Right cardiac atrium (tissue), 5 donors: ENCODE measurements at regions of chr4 and their contacts with region 1.

Region 1: GRCh38 chr4:85968945-85969819 is 390.7 kb downstream of the MAPK10 start:
- DNase-seq: no peak
- ATAC-seq: peak in 1 of 2 donors; percentile 72
- H3K4me3 ChIP-seq: no peak overlapping the region
- H3K27ac ChIP-seq: no peak overlapping the region
- H3K4me1 ChIP-seq: peaks cover 2% of the 10 kb centered on the region
- H3K27me3 ChIP-seq: no peaks in the 10 kb centered on the region

Region 2: GRCh38 chr4:85084380-85085094 is 884.6 kb before region 1 on chr4:
- intact Hi-C with region 1: loop called in 1 of 4 experiments (anchors 10 kb)
- DNase-seq: no peak
- ATAC-seq: peak; percentile 55 to 72
- H3K4me3 ChIP-seq: no peak overlapping the region
- H3K27ac ChIP-seq: no peak overlapping the region
- H3K4me1 ChIP-seq: no peaks in the 10 kb centered on the region
- H3K27me3 ChIP-seq: no peaks in the 10 kb centered on the region

Region 3: GRCh38 chr4:85147439-85148076 is 821.6 kb before region 1 on chr4:
- intact Hi-C with region 1: loop called in 1 of 4 experiments (anchors 5 kb)
- DNase-seq: peak; percentile 45 to 81 (median 55)
- ATAC-seq: peak; percentile 77 to 78
- H3K4me3 ChIP-seq: no peak overlapping the region
- H3K27ac ChIP-seq: no peak overlapping the region
- H3K4me1 ChIP-seq: no peaks in the 10 kb centered on the region
- H3K27me3 ChIP-seq: no peaks in the 10 kb centered on the region

Region 4: GRCh38 chr4:85756938-85757337 is 212.2 kb before region 1 on chr4:
- intact Hi-C with region 1: loop called in 3 of 4 experiments (anchors 10 kb)
- DNase-seq: no peak
- ATAC-seq: peak; percentile 60 to 77
- H3K4me3 ChIP-seq: no peak overlapping the region
- H3K27ac ChIP-seq: no peak overlapping the region
- H3K4me1 ChIP-seq: peaks cover 2% of the 10 kb centered on the region
- H3K27me3 ChIP-seq: no peaks in the 10 kb centered on the region

Region 5: GRCh38 chr4:85761803-85762528 is 207.2 kb before region 1 on chr4:
- intact Hi-C with region 1: loop called in 3 of 4 experiments (anchors 10 kb)
- DNase-seq: peak; percentile 53 to 79 (median 59)
- ATAC-seq: peak; percentile 64 to 65
- H3K4me3 ChIP-seq: peak overlapping the region; percentile 20
- H3K27ac ChIP-seq: peak overlapping the region; percentile 45
- H3K4me1 ChIP-seq: peaks cover 5% of the 10 kb centered on the region
- H3K27me3 ChIP-seq: no peaks in the 10 kb centered on the region

Region 6: DNA sequence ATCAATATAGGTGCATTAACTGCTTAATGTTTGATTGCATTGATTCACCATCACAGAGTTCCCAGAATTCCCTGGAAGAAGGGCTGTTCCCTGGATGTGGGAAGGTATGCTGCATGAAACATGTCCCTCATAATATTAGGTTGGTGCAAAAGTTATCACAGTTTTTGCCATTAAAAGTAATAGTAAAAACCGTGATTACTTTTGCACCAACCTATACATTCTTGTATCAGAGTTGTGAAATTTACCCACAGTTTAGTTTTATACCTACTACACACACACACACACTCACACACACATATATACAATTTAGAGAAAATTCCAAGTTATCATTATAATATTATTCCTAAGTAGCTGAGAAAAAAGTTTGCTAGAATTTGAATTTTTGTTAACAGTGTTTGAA is 173.2 kb before region 1 on chr4:
- intact Hi-C with region 1: loop called in 1 of 4 experiments (anchors 2 kb)
- DNase-seq: no peak
- ATAC-seq: no peak
- H3K4me3 ChIP-seq: no peak overlapping the region
- H3K27ac ChIP-seq: no peak overlapping the region
- H3K4me1 ChIP-seq: no peaks in the 10 kb centered on the region
- H3K27me3 ChIP-seq: no peaks in the 10 kb centered on the region

Region 7: GRCh38 chr4:85873566-85873965 is 95.6 kb before region 1 on chr4:
- intact Hi-C with region 1: no loop called
- DNase-seq: no peak
- ATAC-seq: no peak
- H3K4me3 ChIP-seq: no peak overlapping the region
- H3K27ac ChIP-seq: no peak overlapping the region
- H3K4me1 ChIP-seq: no peaks in the 10 kb centered on the region
- H3K27me3 ChIP-seq: no peaks in the 10 kb centered on the region